ENCODE measurements at regions of chr5 and their contacts with region 1.

Region 1: DNA sequence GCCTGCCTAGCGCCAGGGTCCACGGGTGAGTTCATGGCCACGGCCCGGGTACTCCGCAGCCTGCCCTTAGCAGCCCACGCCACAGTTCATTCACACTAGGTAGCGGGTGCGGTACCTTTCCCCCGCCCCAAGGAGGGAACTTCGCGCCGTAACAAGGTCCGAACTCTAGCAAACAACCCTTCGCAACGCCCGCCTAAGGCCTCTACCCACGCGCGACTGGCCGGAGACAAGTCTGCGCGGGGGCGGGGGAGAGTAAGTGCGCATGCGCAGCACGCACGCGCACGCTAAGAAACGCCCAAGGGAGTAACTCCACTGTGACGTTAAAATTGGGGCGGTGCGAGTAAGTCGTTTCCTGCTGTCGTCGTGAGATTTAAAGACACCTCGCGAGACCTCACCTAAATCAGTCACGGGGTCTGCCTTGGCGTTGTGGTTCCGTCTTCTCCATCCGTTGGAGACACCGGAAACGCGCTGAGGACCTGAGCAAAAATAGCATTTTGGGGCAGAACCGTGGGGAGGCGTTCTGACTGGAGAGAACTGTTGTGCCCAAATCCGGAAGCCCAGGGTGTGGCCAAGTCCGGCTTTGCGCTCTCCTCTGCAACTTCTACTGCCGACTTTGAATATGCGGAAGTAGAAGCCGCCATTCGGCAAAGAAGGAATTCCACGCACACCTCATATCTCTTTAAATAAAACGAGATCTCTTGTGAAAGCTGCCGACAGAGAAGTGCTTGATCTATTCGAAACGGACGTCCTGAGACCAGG is at the start of gene RAPGEF6:
- DNase-seq: peak; percentile 98
- H3K4me3 ChIP-seq: peak within 1 kb of the TSS; percentile 57 to 89 (median 70)
- H3K27ac ChIP-seq: peak within 1 kb of the TSS; percentile 92 to 100 (median 100)
- H3K4me1 ChIP-seq: peaks cover 17 to 70% (median 50%) of the 10 kb centered on the region in 6 donors
- H3K27me3 ChIP-seq: no peaks in the 10 kb centered on the region
- CTCF ChIP-seq: peak in 3 of 11 experiments; percentile 28 to 48 (median 30)
- POLR2A ChIP-seq: peak; percentile 36 to 93 (median 77)
- total RNA-seq, gene RAPGEF6: 37.0 to 56.4 (median 46.9) TPM

Region 2: DNA sequence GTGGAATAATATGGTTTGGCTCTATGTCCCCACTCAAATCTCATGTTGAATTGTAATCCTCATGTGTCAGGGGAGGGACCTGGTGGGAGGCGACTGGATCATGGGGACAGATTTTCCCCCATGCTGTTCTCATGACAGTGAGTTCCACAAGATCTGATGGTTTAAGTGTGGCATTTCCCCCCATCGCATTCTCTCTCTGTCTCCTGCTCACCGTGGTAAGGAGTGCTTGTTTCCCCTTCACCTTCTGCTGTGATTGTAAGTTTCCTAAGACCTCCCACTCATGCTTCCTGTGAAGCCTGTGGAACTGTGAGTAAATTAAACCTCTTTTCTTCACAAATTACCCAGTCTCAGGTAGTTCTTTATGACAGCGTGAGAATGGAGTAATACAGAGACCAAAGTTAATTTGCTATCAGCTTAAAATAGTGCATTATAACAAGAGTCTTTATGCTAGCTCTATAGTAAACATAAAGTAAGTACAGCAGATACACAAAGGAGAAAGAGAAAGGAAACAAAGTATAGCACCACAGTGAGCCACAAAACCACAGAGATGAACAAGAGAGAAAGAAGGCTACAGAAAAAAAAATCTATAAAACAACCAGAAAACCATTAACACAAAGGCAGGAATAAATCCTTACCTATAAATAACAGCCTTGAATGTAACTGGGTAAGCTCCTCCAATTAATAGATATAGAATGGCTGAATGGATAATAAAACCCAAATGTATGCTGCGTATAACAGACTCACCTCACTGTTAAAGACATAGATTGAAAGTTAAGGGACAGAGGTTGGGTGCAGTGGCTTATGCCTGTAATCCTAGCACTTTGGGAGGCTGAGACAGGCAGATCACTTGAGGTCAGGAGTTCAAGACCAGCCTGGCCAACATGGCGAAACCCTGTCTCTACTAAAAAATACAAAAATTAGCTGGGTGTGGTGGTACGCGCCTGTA is 39.8 kb before region 1 on chr5:
- intact Hi-C with region 1: loop called (anchors 5 kb)
- DNase-seq: no peak
- H3K4me3 ChIP-seq: no peak overlapping the region
- H3K27ac ChIP-seq: peak overlapping the region in 5 of 8 donors; percentile 28 to 73 (median 49)
- H3K4me1 ChIP-seq: peaks cover 4 to 39% (median 24%) of the 10 kb centered on the region in 6 donors
- H3K27me3 ChIP-seq: no peaks in the 10 kb centered on the region
- CTCF ChIP-seq: no peak
- POLR2A ChIP-seq: no peak

Region 3: GRCh38 chr5:131796793-131797693 is 161.9 kb after region 1 on chr5 and contains the start of gene FNIP1:
- intact Hi-C with region 1: loop called (anchors 5 kb)
- DNase-seq: peak; percentile 100
- H3K4me3 ChIP-seq: peak within 1 kb of the TSS; percentile 77 to 84 (median 81)
- H3K27ac ChIP-seq: peak within 1 kb of the TSS; percentile 94 to 99 (median 99)
- H3K4me1 ChIP-seq: peaks cover 16 to 53% (median 37%) of the 10 kb centered on the region in 6 donors
- H3K27me3 ChIP-seq: no peaks in the 10 kb centered on the region
- CTCF ChIP-seq: peak in 2 of 11 experiments; percentile 32 to 39
- POLR2A ChIP-seq: peak; percentile 42 to 91 (median 63)
- total RNA-seq, gene FNIP1: 36.3 to 53.4 (median 48.1) TPM

Region 4: DNA sequence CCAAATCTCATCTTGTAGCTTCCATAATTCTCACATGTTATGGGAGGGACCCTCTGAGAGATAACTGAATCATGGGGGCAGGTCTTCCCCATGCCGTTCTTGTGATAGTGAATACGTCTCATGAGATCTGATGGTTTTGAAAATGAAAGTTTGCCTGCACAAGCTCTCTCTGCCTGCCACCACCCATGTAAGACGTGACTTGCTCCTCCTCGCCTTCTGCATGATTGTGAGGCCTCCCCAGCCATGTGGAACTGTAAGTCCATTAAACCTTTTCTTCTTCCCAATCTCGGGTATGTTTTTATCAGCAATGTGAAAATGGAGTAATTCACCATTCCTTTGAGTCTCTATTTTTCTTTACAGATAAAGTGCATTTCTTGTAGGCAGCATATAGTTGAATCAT is 228.5 kb after region 1 on chr5:
- intact Hi-C with region 1: no loop called
- DNase-seq: no peak
- H3K4me3 ChIP-seq: no peak overlapping the region
- H3K27ac ChIP-seq: no peak overlapping the region
- H3K4me1 ChIP-seq: no peaks in the 10 kb centered on the region
- H3K27me3 ChIP-seq: no peaks in the 10 kb centered on the region
- CTCF ChIP-seq: no peak
- POLR2A ChIP-seq: no peak